ENCODE measurements at regions of chr4 and their contacts with region 1.

Region 1: GRCh38 chr4:99949034-99949998 is 759 bp downstream of the H2AZ1 start:
- DNase-seq: peak; percentile 82 to 85
- H3K4me3 ChIP-seq: peak overlapping the region; percentile 96 to 100 (median 100)
- H3K27ac ChIP-seq: peak overlapping the region; percentile 99
- H3K4me1 ChIP-seq: peaks cover 0 to 14% (median 7%) of the 10 kb centered on the region in 4 experiments; a peak in 5 of 7 replicates
- H3K27me3 ChIP-seq: no peaks in the 10 kb centered on the region
- CTCF ChIP-seq: peak; percentile 61 to 89 (median 71)
- EP300 ChIP-seq: no peak
- POLR2A ChIP-seq: peak; percentile 82 to 98
- RAD21 ChIP-seq: peak; percentile 49 to 53

Region 2: DNA sequence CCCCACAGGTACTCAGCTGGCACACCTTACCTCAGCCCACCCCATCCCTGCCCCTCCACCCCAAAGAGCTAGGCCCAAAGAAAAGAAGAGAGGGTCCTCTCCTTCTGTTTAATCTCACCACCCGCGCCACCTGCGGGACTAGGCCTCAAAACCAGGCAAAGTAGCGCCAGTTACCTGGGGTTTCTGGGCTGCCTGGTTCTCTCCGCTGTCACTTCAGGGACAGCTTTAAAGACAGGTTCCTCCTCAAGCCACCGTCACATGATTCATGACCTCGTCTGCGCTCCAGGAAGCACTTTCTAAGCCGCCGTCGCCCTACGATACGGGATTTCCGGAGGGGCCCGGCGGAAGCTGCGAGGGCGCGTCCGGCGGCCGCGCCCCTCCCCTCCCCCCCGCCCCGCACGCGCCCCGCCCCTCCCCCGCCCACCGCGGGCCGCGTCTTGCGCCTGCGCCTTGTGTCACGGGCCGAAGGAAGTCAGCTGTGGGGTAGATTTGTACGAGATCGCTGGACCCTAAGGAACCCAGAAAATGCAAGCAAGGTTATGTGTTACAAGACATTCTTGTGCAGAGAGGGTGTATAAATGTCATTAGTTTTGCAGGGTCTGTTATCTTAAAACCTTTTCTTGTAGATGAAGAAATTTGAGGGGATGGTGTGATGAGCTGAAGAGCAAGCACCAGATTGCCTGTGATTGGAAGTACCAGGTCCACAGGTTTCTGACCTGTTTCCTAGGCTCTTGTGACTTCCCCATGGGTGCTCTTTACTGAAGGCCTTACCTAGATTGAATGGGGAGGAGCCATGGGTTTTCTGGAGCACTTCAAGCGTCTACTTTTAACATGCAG is 54.9 kb before region 1 on chr4 and contains the start of gene LAMTOR3:
- CTCF ChIA-PET with region 1: no interaction called
- POLR2A ChIA-PET with region 1: interaction called, 83 read pairs
- DNase-seq: peak; percentile 61 to 70
- H3K4me3 ChIP-seq: peak within 1 kb of the TSS; percentile 84 to 99 (median 90)
- H3K27ac ChIP-seq: peak within 1 kb of the TSS; percentile 63
- H3K4me1 ChIP-seq: peaks cover 0 to 3% (median 0%) of the 10 kb centered on the region in 4 experiments; a peak in 1 of 7 replicates
- H3K27me3 ChIP-seq: no peaks in the 10 kb centered on the region
- CTCF ChIP-seq: no peak
- EP300 ChIP-seq: no peak
- POLR2A ChIP-seq: no peak
- RAD21 ChIP-seq: no peak
- total RNA-seq, gene LAMTOR3: 24.0 and 25.1 TPM in 2 replicates

Region 3: GRCh38 chr4:99934891-99935290 is 14.4 kb before region 1 on chr4:
- CTCF ChIA-PET with region 1: interaction called, 6 read pairs
- POLR2A ChIA-PET with region 1: interaction called, 29 read pairs
- DNase-seq: no peak
- H3K4me3 ChIP-seq: no peak overlapping the region
- H3K27ac ChIP-seq: no peak overlapping the region
- H3K4me1 ChIP-seq: no peaks in the 10 kb centered on the region
- H3K27me3 ChIP-seq: no peaks in the 10 kb centered on the region
- CTCF ChIP-seq: no peak
- EP300 ChIP-seq: no peak
- POLR2A ChIP-seq: no peak
- RAD21 ChIP-seq: no peak

Region 4: GRCh38 chr4:99998062-99998867 is 48.9 kb after region 1 on chr4:
- CTCF ChIA-PET with region 1: interaction called, 5 read pairs
- POLR2A ChIA-PET with region 1: interaction called, 10 read pairs
- DNase-seq: no peak
- H3K4me3 ChIP-seq: no peak overlapping the region
- H3K27ac ChIP-seq: no peak overlapping the region
- H3K4me1 ChIP-seq: no peaks in the 10 kb centered on the region
- H3K27me3 ChIP-seq: no peaks in the 10 kb centered on the region
- CTCF ChIP-seq: peak in 1 of 3 experiments; percentile 24; a peak in 2 of 4 replicates
- EP300 ChIP-seq: no peak
- POLR2A ChIP-seq: no peak
- RAD21 ChIP-seq: peak; percentile 56 to 60

Region 5: GRCh38 chr4:100093091-100093866 is 144.0 kb after region 1 on chr4:
- CTCF ChIA-PET with region 1: no interaction called
- POLR2A ChIA-PET with region 1: interaction called, 11 read pairs
- DNase-seq: peak; percentile 80 to 81
- H3K4me3 ChIP-seq: no peak overlapping the region
- H3K27ac ChIP-seq: peak overlapping the region; percentile 60
- H3K4me1 ChIP-seq: peaks cover 5 to 10% (median 6%) of the 10 kb centered on the region in 4 experiments; a peak in 4 of 7 replicates
- H3K27me3 ChIP-seq: no peaks in the 10 kb centered on the region
- CTCF ChIP-seq: peak; percentile 29 to 73 (median 59)
- EP300 ChIP-seq: no peak; a peak in 1 of 3 replicates
- POLR2A ChIP-seq: no peak
- RAD21 ChIP-seq: peak; percentile 79 to 80